ENCODE measurements at regions of chr11 and their contacts with region 1.

Region 1: DNA sequence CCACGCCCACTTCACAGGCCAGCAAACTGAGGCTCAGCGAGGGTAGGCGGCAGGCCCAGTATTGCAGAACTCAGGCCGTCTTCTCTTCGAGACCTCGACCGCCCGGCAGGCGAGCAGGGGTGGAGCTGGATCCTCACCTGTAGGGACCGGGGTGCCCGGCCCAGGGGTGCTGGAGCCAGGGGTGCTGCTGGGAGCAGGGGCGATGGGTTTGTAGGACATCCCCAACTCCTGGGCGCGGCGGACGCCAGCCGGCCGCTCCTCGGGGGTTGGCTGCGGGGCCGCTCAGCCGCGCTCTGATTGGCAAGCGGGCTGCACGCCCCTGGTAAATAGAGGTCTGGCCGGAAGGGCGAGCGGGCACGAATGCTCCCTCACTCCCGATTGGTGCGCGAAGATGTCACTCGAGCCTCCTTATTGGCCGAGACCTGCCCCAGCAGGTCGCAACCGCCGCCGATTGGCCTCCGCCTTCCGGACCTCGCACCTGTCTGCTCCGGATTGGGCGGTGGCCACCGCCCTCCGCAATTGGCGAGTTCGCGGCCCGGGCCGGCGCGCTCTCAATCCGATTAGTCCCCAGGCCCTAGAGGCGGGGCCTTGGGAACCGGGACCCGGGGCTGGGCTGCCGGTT is at the start of gene CDK2AP2:
- DNase-seq: peak; percentile 99 to 100
- H3K4me3 ChIP-seq: peak within 1 kb of the TSS; percentile 66
- H3K27ac ChIP-seq: peak within 1 kb of the TSS; percentile 79
- H3K4me1 ChIP-seq: peaks cover 33% of the 10 kb centered on the region
- H3K27me3 ChIP-seq: peaks cover 4% of the 10 kb centered on the region; the same call in 1 of the 2 replicates
- CTCF ChIP-seq: no peak
- total RNA-seq, gene CDK2AP2: 80.0 and 89.3 TPM in 2 replicates

Region 2: DNA sequence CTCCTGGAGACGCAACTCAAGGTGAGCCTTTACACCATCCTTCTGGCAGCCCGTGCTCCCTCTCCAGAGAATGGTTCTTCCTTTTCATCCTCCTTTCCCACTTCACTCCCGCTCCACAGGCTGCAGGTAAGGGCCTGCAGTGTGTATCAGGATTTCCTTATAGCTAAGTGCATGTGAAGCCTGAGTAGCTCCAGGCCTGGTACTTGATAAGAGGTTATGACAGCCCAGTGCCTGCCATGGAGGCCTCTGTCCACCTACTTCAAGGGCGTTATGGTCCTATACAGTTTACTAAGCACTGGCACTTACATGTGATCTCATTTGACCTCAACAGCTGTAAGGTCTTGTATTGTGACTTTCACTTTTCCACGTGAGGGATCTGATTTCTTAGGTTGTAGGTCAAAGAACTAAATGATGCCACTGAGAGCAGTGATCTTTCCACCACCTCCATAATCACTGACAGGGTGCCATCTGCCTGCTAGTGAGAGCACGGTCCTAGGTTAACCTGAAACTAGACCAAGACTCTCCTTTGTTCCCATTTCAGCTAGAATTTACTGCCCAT is 186.6 kb before region 1 on chr11:
- CTCF ChIA-PET with region 1: no interaction called
- POLR2A ChIA-PET with region 1: no interaction called
- intact Hi-C with region 1: no loop called
- DNase-seq: no peak
- H3K4me3 ChIP-seq: no peak overlapping the region
- H3K27ac ChIP-seq: no peak overlapping the region
- H3K4me1 ChIP-seq: peaks cover 12% of the 10 kb centered on the region
- H3K27me3 ChIP-seq: no peaks in the 10 kb centered on the region
- CTCF ChIP-seq: no peak

Region 3: GRCh38 chr11:67345920-67346799 is 161.8 kb before region 1 on chr11:
- CTCF ChIA-PET with region 1: interaction called, 5 read pairs
- POLR2A ChIA-PET with region 1: interaction called, 4 read pairs
- intact Hi-C with region 1: loop called (anchors 1 kb)
- DNase-seq: peak; percentile 76 to 100
- H3K4me3 ChIP-seq: peak overlapping the region; percentile 11; the same call in 1 of the 2 replicates
- H3K27ac ChIP-seq: peak overlapping the region; percentile 82
- H3K4me1 ChIP-seq: peaks cover 48% of the 10 kb centered on the region
- H3K27me3 ChIP-seq: no peaks in the 10 kb centered on the region
- CTCF ChIP-seq: peak; percentile 96

Region 4: DNA sequence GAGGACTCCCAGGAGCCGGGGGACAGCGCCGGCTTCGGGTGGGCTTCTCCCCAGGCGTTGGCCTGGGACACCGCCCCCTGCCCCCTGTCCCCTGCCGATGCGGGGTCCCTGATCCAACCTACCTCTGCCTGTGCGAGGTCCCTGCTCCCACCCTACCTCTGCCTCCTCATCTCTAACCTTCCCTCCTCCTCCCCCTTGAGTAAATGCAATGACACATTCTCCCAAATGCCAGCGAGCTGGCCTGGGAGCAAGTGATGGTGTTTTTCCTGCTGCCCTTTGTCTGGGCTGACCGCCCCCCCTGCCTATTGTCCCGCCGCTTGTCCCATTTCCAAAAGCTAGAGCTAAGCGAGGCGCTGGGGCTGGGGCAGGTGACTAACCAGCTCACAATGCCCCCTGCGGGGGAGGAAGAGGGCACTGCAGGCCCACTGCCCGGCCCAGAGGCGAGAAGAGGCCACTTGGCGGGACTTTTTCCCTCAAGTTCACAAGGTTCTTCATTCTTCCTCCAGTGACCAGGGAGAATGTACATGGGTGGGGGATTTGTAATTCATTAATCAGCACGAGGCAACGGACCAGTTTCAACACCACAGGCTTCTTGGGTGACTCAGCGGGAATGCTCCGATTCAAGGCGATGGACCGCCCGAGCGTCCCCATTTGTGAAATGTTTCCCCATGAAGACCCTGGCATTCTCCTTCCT is 133.9 kb before region 1 on chr11:
- CTCF ChIA-PET with region 1: no interaction called
- POLR2A ChIA-PET with region 1: no interaction called
- intact Hi-C with region 1: loop called (anchors 5 kb)
- DNase-seq: peak; percentile 98 to 99
- H3K4me3 ChIP-seq: peak overlapping the region; percentile 87
- H3K27ac ChIP-seq: peak overlapping the region; percentile 99
- H3K4me1 ChIP-seq: peaks cover 59% of the 10 kb centered on the region
- H3K27me3 ChIP-seq: no peaks in the 10 kb centered on the region
- CTCF ChIP-seq: peak; percentile 64

Region 5: DNA sequence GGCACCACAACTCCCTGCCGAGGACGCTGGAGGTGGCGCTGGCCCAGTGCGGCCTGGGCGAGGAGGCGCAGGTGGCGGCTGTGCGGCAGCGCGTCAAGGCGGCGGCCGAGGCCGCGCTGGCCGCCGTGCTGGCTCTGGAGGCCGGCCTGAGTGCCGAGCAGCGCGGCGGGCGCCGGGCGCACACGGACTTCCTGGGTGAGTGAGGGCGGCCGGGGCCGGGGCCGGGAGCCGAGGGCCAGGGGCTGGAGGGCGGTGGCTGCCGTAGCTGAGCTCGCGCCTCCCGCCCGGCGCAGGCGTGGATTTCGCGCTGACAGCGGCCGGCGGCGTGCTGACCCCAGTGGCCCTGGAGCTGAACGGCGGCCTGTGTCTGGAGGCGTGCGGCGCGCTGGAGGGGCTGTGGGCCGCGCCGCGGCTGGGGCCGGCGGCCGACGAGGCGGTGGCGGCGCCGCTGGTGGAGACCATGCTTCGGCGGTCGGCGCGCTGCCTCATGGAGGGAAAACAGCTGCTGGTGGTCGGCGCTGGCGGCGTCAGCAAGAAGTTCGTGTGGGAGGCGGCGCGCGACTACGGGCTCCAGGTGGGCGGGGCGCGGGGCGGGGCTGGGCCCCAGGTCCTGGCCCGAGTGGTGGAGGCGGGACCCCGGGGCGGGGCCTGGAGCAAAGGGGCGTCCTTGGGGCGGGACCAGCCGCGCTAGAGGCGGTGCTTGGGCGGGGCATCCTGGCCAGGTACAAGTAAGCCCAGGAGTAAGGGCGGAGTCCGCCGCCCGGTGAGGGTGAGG is 87.1 kb before region 1 on chr11:
- CTCF ChIA-PET with region 1: interaction called, 4 read pairs
- POLR2A ChIA-PET with region 1: no interaction called
- intact Hi-C with region 1: loop called (anchors 1 kb)
- DNase-seq: peak; percentile 83 to 100
- H3K4me3 ChIP-seq: peak overlapping the region; percentile 69
- H3K27ac ChIP-seq: no peak overlapping the region
- H3K4me1 ChIP-seq: peaks cover 17% of the 10 kb centered on the region
- H3K27me3 ChIP-seq: no peaks in the 10 kb centered on the region
- CTCF ChIP-seq: no peak

Region 6: DNA sequence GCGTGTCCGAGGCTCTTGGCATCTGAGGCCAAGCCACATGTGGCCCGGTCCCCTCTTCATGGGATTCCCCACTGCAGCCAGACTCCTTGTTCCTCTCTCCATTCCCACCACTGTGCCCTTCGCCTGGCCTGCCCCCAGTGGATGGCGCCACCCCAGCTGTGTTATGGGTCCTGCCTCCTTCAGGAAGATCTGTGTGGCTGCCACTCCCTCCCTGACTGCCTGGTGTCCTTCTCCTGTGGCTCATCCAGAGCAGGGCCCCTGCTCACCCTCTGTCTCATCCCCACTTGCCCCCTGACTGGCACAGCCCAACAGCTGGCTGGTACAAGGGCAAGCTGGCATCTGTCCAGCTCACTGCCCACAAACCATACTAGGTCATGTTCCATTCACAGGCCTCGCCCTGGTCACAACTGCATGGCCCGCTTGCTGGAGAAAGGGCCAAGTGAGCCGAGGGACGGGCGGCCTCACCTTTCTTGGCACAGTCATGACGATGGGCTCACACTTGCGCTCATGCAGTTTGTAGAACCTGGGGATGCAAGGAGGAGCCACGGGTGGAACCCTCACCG is 68.6 kb before region 1 on chr11:
- CTCF ChIA-PET with region 1: no interaction called
- POLR2A ChIA-PET with region 1: no interaction called
- intact Hi-C with region 1: loop called (anchors 5 kb)
- DNase-seq: peak in 1 of 2 experiments; percentile 52
- H3K4me3 ChIP-seq: no peak overlapping the region
- H3K27ac ChIP-seq: no peak overlapping the region
- H3K4me1 ChIP-seq: peaks cover 10% of the 10 kb centered on the region
- H3K27me3 ChIP-seq: no peaks in the 10 kb centered on the region
- CTCF ChIP-seq: peak; percentile 41; the same call in 1 of the 2 replicates

Region 7: DNA sequence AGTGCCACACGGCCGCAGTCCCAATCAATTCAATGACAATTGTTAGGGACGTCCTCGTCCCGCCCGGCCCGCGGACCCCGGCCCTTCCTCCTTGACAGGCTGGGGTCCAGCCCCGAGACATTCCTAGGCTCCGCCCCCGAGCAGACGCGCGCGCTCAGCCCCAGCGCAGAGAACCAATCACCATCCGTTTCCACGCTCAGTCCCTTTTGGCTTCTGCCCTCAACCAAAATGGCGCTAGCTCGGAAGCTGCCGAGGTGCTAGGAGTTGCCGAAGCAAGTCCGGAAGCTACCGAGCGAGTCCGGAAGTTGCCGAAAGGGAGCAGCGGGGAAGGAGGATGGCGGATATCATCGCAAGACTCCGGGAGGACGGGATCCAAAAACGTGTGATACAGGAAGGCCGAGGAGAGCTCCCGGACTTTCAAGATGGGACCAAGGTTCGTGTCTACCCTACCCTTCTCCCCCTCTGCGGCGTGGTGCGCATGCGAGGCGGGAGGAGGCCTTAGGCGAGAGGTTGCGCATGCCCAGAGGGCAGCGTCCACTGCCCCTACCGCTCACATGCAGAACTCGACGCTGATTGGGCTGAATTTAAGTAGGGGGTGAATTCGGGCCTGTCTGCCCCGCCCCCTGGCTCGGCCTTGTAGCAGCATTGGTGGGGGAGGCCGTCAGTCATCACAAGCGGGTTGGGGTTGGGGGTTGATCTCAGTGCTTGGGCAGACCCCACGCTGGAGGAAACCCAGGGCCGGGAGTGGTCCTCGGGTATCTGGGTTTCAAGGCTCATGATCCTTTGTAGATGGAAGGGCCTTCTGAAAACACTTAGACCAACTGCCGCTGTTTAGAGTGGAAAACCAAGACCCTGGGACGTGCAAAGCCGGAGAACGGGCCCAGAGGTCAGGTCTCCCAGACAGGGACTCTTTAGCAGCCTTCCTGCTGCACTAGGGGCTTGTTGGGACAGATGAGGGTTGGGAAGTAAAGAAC is 24.9 kb before region 1 on chr11 and contains the start of gene AIP:
- CTCF ChIA-PET with region 1: no interaction called
- POLR2A ChIA-PET with region 1: interaction called, 3 read pairs
- intact Hi-C with region 1: loop called (anchors 2 kb)
- DNase-seq: peak; percentile 96 to 98
- H3K4me3 ChIP-seq: peak within 1 kb of the TSS; percentile 61
- H3K27ac ChIP-seq: peak within 1 kb of the TSS; percentile 34
- H3K4me1 ChIP-seq: peaks cover 17% of the 10 kb centered on the region
- H3K27me3 ChIP-seq: no peaks in the 10 kb centered on the region
- CTCF ChIP-seq: peak; percentile 34; the same call in 1 of the 2 replicates
- total RNA-seq, gene AIP: 95.3 and 125 TPM in 2 replicates

Region 8: DNA sequence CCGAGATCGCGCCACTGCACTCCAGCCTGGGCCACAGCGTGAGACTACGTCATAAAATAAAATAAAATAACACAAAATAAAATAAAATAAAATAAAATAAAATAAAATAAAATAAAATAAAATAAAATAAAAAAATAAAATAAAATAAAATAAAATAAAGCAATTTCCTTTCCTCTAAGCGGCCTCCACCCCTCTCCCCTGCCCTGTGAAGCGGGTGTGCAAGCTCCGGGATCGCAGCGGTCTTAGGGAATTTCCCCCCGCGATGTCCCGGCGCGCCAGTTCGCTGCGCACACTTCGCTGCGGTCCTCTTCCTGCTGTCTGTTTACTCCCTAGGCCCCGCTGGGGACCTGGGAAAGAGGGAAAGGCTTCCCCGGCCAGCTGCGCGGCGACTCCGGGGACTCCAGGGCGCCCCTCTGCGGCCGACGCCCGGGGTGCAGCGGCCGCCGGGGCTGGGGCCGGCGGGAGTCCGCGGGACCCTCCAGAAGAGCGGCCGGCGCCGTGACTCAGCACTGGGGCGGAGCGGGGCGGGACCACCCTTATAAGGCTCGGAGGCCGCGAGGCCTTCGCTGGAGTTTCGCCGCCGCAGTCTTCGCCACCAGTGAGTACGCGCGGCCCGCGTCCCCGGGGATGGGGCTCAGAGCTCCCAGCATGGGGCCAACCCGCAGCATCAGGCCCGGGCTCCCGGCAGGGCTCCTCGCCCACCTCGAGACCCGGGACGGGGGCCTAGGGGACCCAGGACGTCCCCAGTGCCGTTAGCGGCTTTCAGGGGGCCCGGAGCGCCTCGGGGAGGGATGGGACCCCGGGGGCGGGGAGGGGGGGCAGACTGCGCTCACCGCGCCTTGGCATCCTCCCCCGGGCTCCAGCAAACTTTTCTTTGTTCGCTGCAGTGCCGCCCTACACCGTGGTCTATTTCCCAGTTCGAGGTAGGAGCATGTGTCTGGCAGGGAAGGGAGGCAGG is 75.6 kb after region 1 on chr11 and contains the start of gene GSTP1:
- CTCF ChIA-PET with region 1: no interaction called
- POLR2A ChIA-PET with region 1: no interaction called
- intact Hi-C with region 1: loop called (anchors 2 kb)
- DNase-seq: peak; percentile 75 to 94
- H3K4me3 ChIP-seq: peak within 1 kb of the TSS; percentile 82
- H3K27ac ChIP-seq: peak within 1 kb of the TSS; percentile 69
- H3K4me1 ChIP-seq: peaks cover 52% of the 10 kb centered on the region
- H3K27me3 ChIP-seq: no peaks in the 10 kb centered on the region
- CTCF ChIP-seq: peak; percentile 78
- total RNA-seq, gene GSTP1: 2,063 and 2,645 TPM in 2 replicates